ENCODE measurements at regions of chr1 and their contacts with region 1.

Region 1: GRCh38 chr1:182084487-182085316 is 23.2 kb upstream of the ZNF648 start:
- DNase-seq: peak; percentile 56
- H3K4me3 ChIP-seq: no peak overlapping the region
- H3K27ac ChIP-seq: no peak overlapping the region
- H3K4me1 ChIP-seq: peaks cover 2% of the 10 kb centered on the region
- H3K27me3 ChIP-seq: no peaks in the 10 kb centered on the region
- CTCF ChIP-seq: peak; percentile 55 to 70
- POLR2A ChIP-seq: no peak

Region 2: GRCh38 chr1:181189691-181190363 is 894.9 kb before region 1 on chr1:
- CTCF ChIA-PET with region 1: interaction called, 13 read pairs
- POLR2A ChIA-PET with region 1: no interaction called
- dilution Hi-C with region 1: no loop called
- intact Hi-C with region 1: no loop called
- DNase-seq: peak; percentile 54
- H3K4me3 ChIP-seq: no peak overlapping the region
- H3K27ac ChIP-seq: no peak overlapping the region
- H3K4me1 ChIP-seq: no peaks in the 10 kb centered on the region
- H3K27me3 ChIP-seq: peaks cover 0 to 13% of the 10 kb centered on the region in 2 experiments
- CTCF ChIP-seq: peak; percentile 95 to 97
- POLR2A ChIP-seq: no peak

Region 3: DNA sequence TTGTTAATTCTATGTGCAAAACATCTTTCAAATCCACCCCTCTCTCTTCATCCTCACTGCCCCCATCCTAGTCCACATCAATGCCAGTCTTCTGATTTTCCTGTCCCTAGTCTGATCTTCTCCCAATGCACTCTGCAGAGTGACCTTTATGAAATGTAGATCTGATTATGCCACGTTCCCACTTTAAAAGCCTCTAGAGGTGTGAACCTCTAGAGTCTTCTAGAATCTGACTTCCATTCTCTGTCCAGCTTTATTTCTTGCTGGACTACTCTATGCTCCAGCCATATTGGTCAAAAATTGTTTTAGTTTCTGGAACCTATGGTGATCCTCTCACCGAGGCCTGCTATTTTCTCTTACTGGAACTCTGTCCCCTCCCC is 55.7 kb before region 1 on chr1:
- CTCF ChIA-PET with region 1: no interaction called
- POLR2A ChIA-PET with region 1: no interaction called
- dilution Hi-C with region 1: no loop called
- intact Hi-C with region 1: no loop called
- DNase-seq: no peak
- H3K4me3 ChIP-seq: peak overlapping the region in 1 of 3 experiments; percentile 21
- H3K27ac ChIP-seq: no peak overlapping the region
- H3K4me1 ChIP-seq: no peaks in the 10 kb centered on the region
- H3K27me3 ChIP-seq: no peaks in the 10 kb centered on the region
- CTCF ChIP-seq: no peak
- POLR2A ChIP-seq: no peak

Region 4: GRCh38 chr1:182054698-182055326 is 29.9 kb before region 1 on chr1:
- CTCF ChIA-PET with region 1: interaction called, 14 read pairs
- POLR2A ChIA-PET with region 1: no interaction called
- dilution Hi-C with region 1: no loop called
- intact Hi-C with region 1: no loop called
- DNase-seq: peak; percentile 15
- H3K4me3 ChIP-seq: no peak overlapping the region
- H3K27ac ChIP-seq: no peak overlapping the region
- H3K4me1 ChIP-seq: no peaks in the 10 kb centered on the region
- H3K27me3 ChIP-seq: no peaks in the 10 kb centered on the region
- CTCF ChIP-seq: peak; percentile 28
- POLR2A ChIP-seq: no peak

Region 5: GRCh38 chr1:182143154-182143657 is 58.5 kb after region 1 on chr1:
- CTCF ChIA-PET with region 1: interaction called, 21 read pairs
- POLR2A ChIA-PET with region 1: no interaction called
- dilution Hi-C with region 1: no loop called
- intact Hi-C with region 1: loop called (anchors 1 kb)
- DNase-seq: peak; percentile 79
- H3K4me3 ChIP-seq: no peak overlapping the region
- H3K27ac ChIP-seq: no peak overlapping the region
- H3K4me1 ChIP-seq: no peaks in the 10 kb centered on the region
- H3K27me3 ChIP-seq: no peaks in the 10 kb centered on the region
- CTCF ChIP-seq: peak; percentile 84 to 90
- POLR2A ChIP-seq: no peak

Region 6: GRCh38 chr1:182397771-182398393 is 313.2 kb after region 1 on chr1:
- CTCF ChIA-PET with region 1: interaction called, 51 read pairs
- POLR2A ChIA-PET with region 1: no interaction called
- dilution Hi-C with region 1: no loop called
- intact Hi-C with region 1: loop called (anchors 1 kb)
- DNase-seq: no peak
- H3K4me3 ChIP-seq: no peak overlapping the region
- H3K27ac ChIP-seq: no peak overlapping the region
- H3K4me1 ChIP-seq: no peaks in the 10 kb centered on the region
- H3K27me3 ChIP-seq: no peaks in the 10 kb centered on the region
- CTCF ChIP-seq: no peak
- POLR2A ChIP-seq: no peak

Region 7: GRCh38 chr1:182789138-182790076 is 704.7 kb after region 1 on chr1 and contains the start of gene NPL:
- CTCF ChIA-PET with region 1: interaction called, 8 read pairs
- POLR2A ChIA-PET with region 1: no interaction called
- dilution Hi-C with region 1: no loop called
- intact Hi-C with region 1: loop called (anchors 2 kb)
- DNase-seq: peak; percentile 71
- H3K4me3 ChIP-seq: peak within 1 kb of the TSS; percentile 41 to 63 (median 54)
- H3K27ac ChIP-seq: no peak within 1 kb of the TSS
- H3K4me1 ChIP-seq: peaks cover 8% of the 10 kb centered on the region
- H3K27me3 ChIP-seq: peaks cover 34 to 59% of the 10 kb centered on the region in 2 experiments
- CTCF ChIP-seq: no peak
- POLR2A ChIP-seq: peak; percentile 42
- total RNA-seq, gene NPL: 0.75 and 1.3 TPM in 2 replicates